ENCODE measurements at regions of chr3 and their contacts with region 1.

Region 1: GRCh38 chr3:133573054-133573628 is 345 bp upstream of the CDV3 start:
- DNase-seq: peak; percentile 100
- H3K4me3 ChIP-seq: peak overlapping the region; percentile 42
- H3K27ac ChIP-seq: peak overlapping the region; percentile 83
- H3K27me3 ChIP-seq: no peaks in the 10 kb centered on the region
- CTCF ChIP-seq: peak; percentile 12; the same call in 1 of the 2 replicates

Region 2: DNA sequence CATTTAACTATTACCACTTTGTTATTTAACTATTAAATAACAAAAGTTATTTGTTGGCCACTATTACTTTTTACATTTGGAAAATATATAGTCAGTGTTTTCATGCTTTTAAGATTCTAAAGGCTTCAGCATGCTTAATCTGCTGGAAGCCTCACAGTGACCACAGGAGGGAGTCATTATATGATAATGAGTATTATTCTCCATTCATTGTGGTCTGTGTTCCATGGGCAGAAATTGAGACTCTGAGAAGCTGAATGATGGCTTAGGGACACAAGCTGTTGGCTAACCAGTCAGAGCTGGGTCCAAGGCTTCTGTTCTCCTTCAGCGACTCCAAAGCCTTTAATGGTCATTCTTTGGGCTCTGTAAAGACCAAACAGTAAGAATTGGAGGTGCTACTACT is 108.6 kb before region 1 on chr3:
- CTCF ChIA-PET with region 1: interaction called, 54 read pairs
- POLR2A ChIA-PET with region 1: interaction called, 6 read pairs
- DNase-seq: no peak
- H3K4me3 ChIP-seq: no peak overlapping the region
- H3K27ac ChIP-seq: no peak overlapping the region
- H3K27me3 ChIP-seq: no peaks in the 10 kb centered on the region
- CTCF ChIP-seq: peak; percentile 52

Region 3: GRCh38 chr3:133535971-133536634 is 37.0 kb before region 1 on chr3:
- CTCF ChIA-PET with region 1: interaction called, 4 read pairs
- POLR2A ChIA-PET with region 1: interaction called, 21 read pairs
- DNase-seq: peak; percentile 88
- H3K4me3 ChIP-seq: peak overlapping the region; percentile 41
- H3K27ac ChIP-seq: peak overlapping the region; percentile 97
- H3K27me3 ChIP-seq: no peaks in the 10 kb centered on the region
- CTCF ChIP-seq: no peak

Region 4: DNA sequence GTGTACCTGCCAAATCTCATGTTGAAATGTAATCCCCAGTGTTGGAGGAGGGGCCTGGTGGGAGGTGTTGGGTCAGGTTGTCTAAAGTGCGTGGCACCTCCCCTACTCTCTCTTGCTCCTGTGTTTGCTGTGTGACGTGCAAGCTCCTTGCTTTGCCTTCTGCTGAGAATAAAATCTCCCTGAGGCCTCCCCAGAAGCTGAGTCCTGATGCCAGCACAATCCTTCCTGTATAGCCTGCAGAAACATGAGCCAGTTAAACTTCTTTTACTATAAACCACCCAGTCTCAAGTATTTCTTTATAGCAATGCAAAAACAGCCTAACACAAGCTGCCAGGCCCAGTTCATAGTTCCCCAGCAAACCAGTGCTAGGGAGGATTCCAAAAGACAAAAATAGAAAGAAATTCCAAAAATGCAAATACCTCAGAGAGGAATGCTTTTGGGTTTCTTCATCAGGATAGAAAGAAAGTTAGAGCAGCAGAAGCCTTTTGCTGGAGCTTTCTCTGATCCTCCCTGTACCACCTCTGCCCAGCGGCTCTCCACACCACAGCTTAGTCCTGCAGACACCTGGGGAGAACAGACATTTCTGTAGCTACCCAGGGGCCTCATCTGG is 25.6 kb before region 1 on chr3:
- CTCF ChIA-PET with region 1: interaction called, 9 read pairs
- POLR2A ChIA-PET with region 1: interaction called, 12 read pairs
- DNase-seq: no peak
- H3K4me3 ChIP-seq: no peak overlapping the region
- H3K27ac ChIP-seq: peak overlapping the region; percentile 86
- H3K27me3 ChIP-seq: no peaks in the 10 kb centered on the region
- CTCF ChIP-seq: no peak

Measured in AG04450 (cell line).